ENCODE measurements at regions of chr10 and their contacts with region 1.

Region 1: GRCh38 chr10:114694752-114695151 is 36.7 kb upstream of the ABLIM1 start:
- DNase-seq: peak; percentile 68
- H3K4me3 ChIP-seq: no peak overlapping the region
- H3K27ac ChIP-seq: no peak overlapping the region
- H3K4me1 ChIP-seq: peaks cover 16% of the 10 kb centered on the region
- H3K27me3 ChIP-seq: no peaks in the 10 kb centered on the region
- CTCF ChIP-seq: peak; percentile 84

Region 2: DNA sequence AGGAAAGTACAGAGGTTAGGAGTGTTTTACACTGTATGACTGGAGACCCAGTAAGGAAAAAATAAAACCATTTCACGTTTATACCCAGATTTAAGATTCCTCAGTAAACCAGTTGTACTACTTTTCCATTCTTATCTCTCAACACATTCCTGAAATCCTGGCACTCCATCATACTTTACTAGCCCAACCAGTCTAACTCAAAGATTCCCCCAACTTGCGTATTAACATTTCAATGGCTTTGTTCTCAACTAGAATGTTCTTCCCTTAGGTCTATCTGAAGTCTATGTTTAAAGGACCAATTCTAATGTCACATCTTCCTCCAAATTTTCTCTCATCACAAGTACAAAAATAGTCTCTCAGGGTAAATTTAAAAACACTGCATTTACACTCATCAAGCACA is 528.7 kb before region 1 on chr10:
- CTCF ChIA-PET with region 1: no interaction called
- POLR2A ChIA-PET with region 1: no interaction called
- intact Hi-C with region 1: no loop called
- DNase-seq: no peak
- H3K4me3 ChIP-seq: no peak overlapping the region
- H3K27ac ChIP-seq: no peak overlapping the region
- H3K4me1 ChIP-seq: no peaks in the 10 kb centered on the region
- H3K27me3 ChIP-seq: no peaks in the 10 kb centered on the region
- CTCF ChIP-seq: no peak

Region 3: DNA sequence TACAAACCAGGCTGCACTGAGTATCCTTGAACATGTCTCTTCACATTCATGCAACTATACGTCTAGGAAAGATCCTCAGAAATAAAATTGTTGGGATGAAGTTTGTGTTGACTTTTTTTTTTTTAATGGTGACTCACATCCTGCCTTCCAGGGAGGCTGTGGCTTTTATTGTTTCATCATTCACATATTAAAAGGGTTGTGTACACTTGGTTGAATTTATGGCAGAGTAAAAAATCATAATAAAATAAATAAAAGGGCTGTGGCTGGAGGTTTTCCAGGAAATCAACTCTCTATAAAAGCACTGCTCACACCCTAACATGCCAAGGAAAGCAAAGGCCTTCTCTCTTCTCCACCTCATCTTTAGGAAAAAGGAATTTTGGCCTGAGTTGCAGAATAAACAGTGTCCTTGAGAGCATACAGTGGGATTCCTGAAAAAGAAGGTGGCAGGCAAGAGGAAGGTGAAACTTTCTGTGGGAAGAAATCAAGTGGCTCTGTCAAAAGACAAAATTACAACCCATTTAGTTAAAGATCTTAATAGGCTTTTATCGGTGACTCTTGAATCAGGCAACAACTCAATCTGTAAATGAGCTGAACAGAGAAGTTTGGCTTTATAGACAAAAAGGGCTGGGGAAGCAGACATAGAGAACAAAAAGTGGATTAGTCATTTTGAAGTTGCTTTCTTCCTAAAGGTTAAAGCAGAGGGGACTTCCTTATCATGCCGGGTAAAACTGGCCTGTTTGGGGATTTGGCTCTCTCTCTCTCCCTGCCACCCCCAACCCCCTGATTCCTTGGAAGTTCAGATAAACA is 85.3 kb after region 1 on chr10:
- CTCF ChIA-PET with region 1: no interaction called
- POLR2A ChIA-PET with region 1: no interaction called
- intact Hi-C with region 1: loop called (anchors 5 kb)
- DNase-seq: peak; percentile 82
- H3K4me3 ChIP-seq: no peak overlapping the region
- H3K27ac ChIP-seq: no peak overlapping the region
- H3K4me1 ChIP-seq: peaks cover 17% of the 10 kb centered on the region
- H3K27me3 ChIP-seq: no peaks in the 10 kb centered on the region
- CTCF ChIP-seq: no peak

Region 4: DNA sequence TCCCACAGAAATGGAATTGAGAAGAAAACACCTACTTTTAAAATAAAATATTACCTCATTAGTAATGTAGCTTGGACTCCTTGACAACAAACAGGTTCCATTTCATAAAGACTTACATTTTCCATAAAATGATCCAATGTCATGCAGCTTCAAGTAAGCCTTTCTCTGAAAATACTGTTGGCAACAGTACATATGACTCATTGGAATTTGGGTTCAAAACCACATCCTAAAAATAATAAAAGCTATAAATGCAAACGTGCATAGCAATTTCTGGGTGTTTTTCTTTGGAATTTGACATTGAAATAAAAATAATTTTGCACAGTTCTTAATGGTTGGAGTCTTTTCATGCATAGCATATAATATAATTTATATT is 174.8 kb after region 1 on chr10:
- CTCF ChIA-PET with region 1: no interaction called
- POLR2A ChIA-PET with region 1: no interaction called
- intact Hi-C with region 1: no loop called
- DNase-seq: peak; percentile 44
- H3K4me3 ChIP-seq: no peak overlapping the region
- H3K27ac ChIP-seq: no peak overlapping the region
- H3K4me1 ChIP-seq: no peaks in the 10 kb centered on the region
- H3K27me3 ChIP-seq: no peaks in the 10 kb centered on the region
- CTCF ChIP-seq: no peak

Measured in A673 (cell line).